ENCODE measurements at regions of chr14 and their contacts with region 1.

Region 1: DNA sequence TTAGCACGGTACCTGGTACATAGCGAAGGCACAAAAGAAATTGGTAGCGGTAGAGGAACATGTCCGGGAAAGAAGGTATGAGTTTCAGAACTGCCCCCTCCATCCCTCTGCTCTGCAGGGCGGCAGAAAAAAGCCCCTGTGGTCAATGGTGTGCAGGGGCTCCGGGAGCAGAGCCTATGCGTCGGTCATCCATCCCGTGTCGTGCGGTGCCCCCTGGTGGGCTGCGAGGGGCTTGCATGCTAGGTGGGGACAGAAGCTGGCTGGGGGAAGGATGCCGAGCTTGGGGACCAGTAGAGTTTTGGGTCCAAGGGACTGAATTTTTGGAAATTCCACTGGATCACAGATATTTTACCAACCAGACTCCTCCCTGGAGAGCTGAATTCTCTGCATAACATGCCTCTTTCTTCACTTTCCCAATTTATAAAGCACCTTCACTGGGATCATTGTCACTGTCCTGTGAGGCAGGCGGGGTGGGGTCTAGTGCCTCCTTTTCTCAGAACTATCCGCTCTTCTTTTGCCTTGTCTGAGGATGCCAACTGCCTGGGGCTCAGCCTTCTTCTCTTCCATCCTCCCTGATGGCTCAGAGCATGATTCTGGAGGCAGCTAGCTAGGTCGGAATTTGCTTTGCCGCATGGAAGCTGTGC is 148.7 kb downstream of the SMOC1 start:
- DNase-seq: peak in 32 of 35 experiments; percentile 6 to 60 (median 38)
- ATAC-seq: peak in 2 of 4 experiments; percentile 26 to 53
- H3K4me3 ChIP-seq: no peak overlapping the region
- H3K4me3 Mint-ChIP-seq: no peak overlapping the region
- H3K27ac ChIP-seq: no peak overlapping the region
- H3K27ac Mint-ChIP-seq: no peak overlapping the region
- H3K4me1 ChIP-seq: no peaks in the 10 kb centered on the region
- H3K4me1 Mint-ChIP-seq: peaks cover 0 to 6% (median 2%) of the 10 kb centered on the region in 3 donors
- H3K27me3 ChIP-seq: peaks cover 0 to 26% of the 10 kb centered on the region in 2 experiments
- H3K27me3 Mint-ChIP-seq: peaks cover 9 to 13% of the 10 kb centered on the region in 2 donors

Region 2: DNA sequence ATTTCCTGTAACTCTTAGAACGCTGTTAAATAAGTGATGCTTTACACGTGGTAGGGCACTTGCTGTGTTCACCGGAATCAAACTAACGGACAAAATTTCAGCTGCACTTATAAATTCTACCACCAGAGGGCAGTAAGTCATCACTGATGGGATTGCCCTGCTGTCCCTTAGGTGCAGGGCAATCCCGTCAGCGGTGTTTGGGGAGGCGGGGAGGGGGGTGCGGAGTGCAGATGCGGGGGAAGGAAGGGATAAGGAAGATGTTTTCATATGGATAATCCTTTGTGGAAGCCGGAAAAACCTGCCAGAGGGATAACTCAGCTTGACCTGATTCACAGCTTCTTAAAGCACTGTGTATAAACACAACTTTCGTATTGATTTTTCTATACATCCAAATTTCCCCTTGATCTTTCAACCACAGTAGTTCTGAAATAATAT is 209.1 kb before region 1 on chr14:
- CTCF ChIA-PET with region 1: interaction called, 3 to 10 read pairs
- POLR2A ChIA-PET with region 1: no interaction called
- DNase-seq: peak in 31 of 35 experiments; percentile 4 to 80 (median 26)
- ATAC-seq: peak; percentile 71 to 76 (median 72)
- H3K4me3 ChIP-seq: no peak overlapping the region
- H3K4me3 Mint-ChIP-seq: no peak overlapping the region
- H3K27ac ChIP-seq: no peak overlapping the region
- H3K27ac Mint-ChIP-seq: no peak overlapping the region
- H3K4me1 ChIP-seq: peaks cover 0 to 5% of the 10 kb centered on the region in 2 experiments
- H3K4me1 Mint-ChIP-seq: peaks cover 3 to 5% (median 4%) of the 10 kb centered on the region in 3 donors
- H3K27me3 ChIP-seq: peaks cover 0 to 23% of the 10 kb centered on the region in 2 experiments
- H3K27me3 Mint-ChIP-seq: peaks cover 0 to 4% of the 10 kb centered on the region in 2 donors

Region 3: GRCh38 chr14:69956970-69957369 is 70.9 kb before region 1 on chr14:
- CTCF ChIA-PET with region 1: no interaction called
- POLR2A ChIA-PET with region 1: no interaction called
- DNase-seq: no peak
- ATAC-seq: no peak
- H3K4me3 ChIP-seq: no peak overlapping the region
- H3K4me3 Mint-ChIP-seq: no peak overlapping the region
- H3K27ac ChIP-seq: no peak overlapping the region
- H3K27ac Mint-ChIP-seq: no peak overlapping the region
- H3K4me1 ChIP-seq: no peaks in the 10 kb centered on the region
- H3K4me1 Mint-ChIP-seq: no peaks in the 10 kb centered on the region
- H3K27me3 ChIP-seq: peaks cover 0 to 17% of the 10 kb centered on the region in 2 experiments
- H3K27me3 Mint-ChIP-seq: peaks cover 26 to 28% of the 10 kb centered on the region in 2 donors